ENCODE measurements at regions of chr7 and their contacts with region 1.

Region 1: DNA sequence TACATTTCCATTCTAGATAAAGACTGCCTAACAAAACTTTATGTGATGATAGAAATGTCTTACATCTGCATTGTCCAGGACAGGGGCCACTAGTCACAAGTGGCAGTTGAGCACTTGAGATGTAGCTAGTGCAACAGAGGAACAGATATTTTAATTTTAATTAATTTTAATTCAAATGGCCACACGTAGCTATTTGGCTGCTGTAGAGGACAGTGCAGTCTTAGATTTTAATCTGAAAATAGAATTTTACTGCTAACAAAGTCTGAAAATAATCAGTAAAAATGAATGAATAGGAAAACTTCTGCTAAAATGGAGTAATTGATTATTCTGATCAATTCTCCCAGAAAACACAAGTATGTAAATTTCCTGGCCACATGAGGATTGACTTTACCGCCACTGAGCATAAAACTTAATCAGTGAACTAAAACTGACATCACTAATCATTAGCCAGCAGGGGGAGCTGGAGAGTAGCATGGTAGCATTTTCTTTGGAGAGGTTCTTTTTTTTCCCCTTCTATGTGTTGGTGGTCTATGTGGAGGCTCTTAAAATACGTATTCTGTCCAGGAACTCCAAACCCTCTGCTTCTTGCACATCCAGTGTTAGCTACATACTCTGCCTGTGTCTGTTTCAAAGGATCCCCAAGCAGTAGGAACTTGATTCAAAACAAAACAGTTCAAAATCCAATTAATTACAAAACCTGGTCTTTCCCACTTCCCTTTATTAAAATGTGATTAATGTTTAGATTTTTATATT is 52.1 kb downstream of the TSPAN12 start:
- DNase-seq: peak; percentile 6 to 14
- ATAC-seq: peak in 1 of 2 donors; percentile 70
- H3K4me3 ChIP-seq: no peak overlapping the region
- H3K27ac ChIP-seq: no peak overlapping the region
- H3K4me1 ChIP-seq: no peaks in the 10 kb centered on the region
- H3K27me3 ChIP-seq: no peaks in the 10 kb centered on the region
- CTCF ChIP-seq: peak; percentile 59 to 86 (median 72)
- POLR2A ChIP-seq: no peak

Region 2: GRCh38 chr7:120467676-120468075 is 338.1 kb before region 1 on chr7:
- in situ Hi-C with region 1: no loop called
- intact Hi-C with region 1: no loop called
- DNase-seq: no peak
- ATAC-seq: no peak
- H3K4me3 ChIP-seq: no peak overlapping the region
- H3K27ac ChIP-seq: no peak overlapping the region
- H3K4me1 ChIP-seq: no peaks in the 10 kb centered on the region
- H3K27me3 ChIP-seq: no peaks in the 10 kb centered on the region
- CTCF ChIP-seq: no peak
- POLR2A ChIP-seq: no peak

Region 3: GRCh38 chr7:120833546-120833945 is 27.7 kb after region 1 on chr7:
- in situ Hi-C with region 1: no loop called
- intact Hi-C with region 1: no loop called
- DNase-seq: no peak
- ATAC-seq: no peak
- H3K4me3 ChIP-seq: no peak overlapping the region
- H3K27ac ChIP-seq: no peak overlapping the region
- H3K4me1 ChIP-seq: no peaks in the 10 kb centered on the region
- H3K27me3 ChIP-seq: no peaks in the 10 kb centered on the region
- CTCF ChIP-seq: no peak
- POLR2A ChIP-seq: no peak

Region 4: GRCh38 chr7:120857588-120858573 is 52.1 kb after region 1 on chr7 and contains the start of gene TSPAN12:
- in situ Hi-C with region 1: no loop called
- intact Hi-C with region 1: loop called (anchors 2 kb)
- DNase-seq: peak; percentile 37 to 61
- ATAC-seq: peak; percentile 85 to 90
- H3K4me3 ChIP-seq: peak within 1 kb of the TSS; percentile 66 to 92 (median 82)
- H3K27ac ChIP-seq: peak within 1 kb of the TSS; percentile 74 to 85 (median 82)
- H3K4me1 ChIP-seq: peaks cover 7 to 13% of the 10 kb centered on the region in 2 donors
- H3K27me3 ChIP-seq: no peaks in the 10 kb centered on the region
- CTCF ChIP-seq: peak; percentile 38 to 68 (median 62)
- POLR2A ChIP-seq: peak in 1 of 2 donors; percentile 28
- total RNA-seq, gene TSPAN12: 1.3 to 6.3 (median 2.8) TPM

Region 5: DNA sequence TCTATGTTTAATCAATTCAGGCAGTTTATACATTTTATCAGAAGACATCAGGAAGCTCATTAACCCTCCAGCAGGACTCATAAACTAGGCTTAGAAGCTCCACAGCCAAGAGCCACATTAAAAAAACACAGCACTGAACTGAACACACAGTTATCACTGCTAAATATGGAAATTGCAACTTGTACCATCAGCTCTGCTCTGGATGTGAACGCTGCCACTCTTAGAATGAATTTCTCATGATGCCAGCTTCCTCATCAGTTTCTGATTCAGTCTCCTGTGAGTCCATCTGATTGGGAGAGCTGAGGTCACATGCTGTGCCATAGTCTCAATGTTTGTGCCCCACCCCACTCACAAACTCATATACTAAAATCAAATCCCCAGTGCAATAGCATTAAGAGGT is 127.7 kb after region 1 on chr7:
- in situ Hi-C with region 1: loop called (anchors 5 to 25 kb)
- intact Hi-C with region 1: no loop called
- DNase-seq: no peak
- ATAC-seq: no peak
- H3K4me3 ChIP-seq: no peak overlapping the region
- H3K27ac ChIP-seq: no peak overlapping the region
- H3K4me1 ChIP-seq: no peaks in the 10 kb centered on the region
- H3K27me3 ChIP-seq: no peaks in the 10 kb centered on the region
- CTCF ChIP-seq: no peak
- POLR2A ChIP-seq: no peak

Region 6: GRCh38 chr7:120941064-120941463 is 135.3 kb after region 1 on chr7:
- in situ Hi-C with region 1: loop called (anchors 5 to 25 kb)
- intact Hi-C with region 1: loop called (anchors 5 kb)
- DNase-seq: no peak
- ATAC-seq: no peak
- H3K4me3 ChIP-seq: no peak overlapping the region
- H3K27ac ChIP-seq: peak overlapping the region in 2 of 4 donors; percentile 37 to 59
- H3K4me1 ChIP-seq: no peaks in the 10 kb centered on the region
- H3K27me3 ChIP-seq: no peaks in the 10 kb centered on the region
- CTCF ChIP-seq: peak in 3 of 5 experiments; percentile 21 to 31 (median 27)
- POLR2A ChIP-seq: no peak

Region 7: DNA sequence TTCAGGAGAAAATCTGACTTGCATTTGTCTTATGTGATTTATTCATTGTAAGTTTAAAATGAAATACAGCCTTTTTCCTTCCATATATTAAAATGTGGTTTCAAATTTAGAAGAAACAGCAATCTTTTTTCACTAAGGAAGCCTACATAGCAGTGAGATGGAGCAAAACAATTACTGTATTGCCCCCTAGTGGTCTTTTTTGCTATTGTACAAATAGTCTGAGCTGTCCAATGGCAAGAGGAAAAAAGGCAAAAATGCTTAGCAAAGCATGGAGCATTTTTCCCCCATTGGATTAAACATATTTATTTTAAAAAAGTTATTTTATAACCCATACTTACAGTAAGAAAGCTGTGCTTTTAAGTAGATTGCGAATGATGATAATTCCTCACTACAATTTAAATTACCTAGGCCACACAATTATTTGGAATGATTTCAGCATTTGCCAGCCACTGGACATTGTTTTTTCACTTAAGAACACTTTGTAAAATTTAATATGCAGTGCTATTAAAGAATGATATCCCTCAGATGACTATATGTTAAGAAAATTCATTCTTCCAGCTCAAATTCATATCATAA is 302.2 kb after region 1 on chr7:
- in situ Hi-C with region 1: loop called (anchors 5 to 25 kb)
- intact Hi-C with region 1: loop called (anchors 1 kb)
- DNase-seq: no peak
- ATAC-seq: peak; percentile 79 to 82
- H3K4me3 ChIP-seq: no peak overlapping the region
- H3K27ac ChIP-seq: peak overlapping the region in 3 of 4 donors; percentile 12 to 47 (median 24)
- H3K4me1 ChIP-seq: peaks cover 14 to 22% of the 10 kb centered on the region in 2 donors
- H3K27me3 ChIP-seq: no peaks in the 10 kb centered on the region
- CTCF ChIP-seq: peak; percentile 69 to 76 (median 73)
- POLR2A ChIP-seq: no peak